ENCODE measurements at regions of chr9 and their contacts with region 1.

Region 1: DNA sequence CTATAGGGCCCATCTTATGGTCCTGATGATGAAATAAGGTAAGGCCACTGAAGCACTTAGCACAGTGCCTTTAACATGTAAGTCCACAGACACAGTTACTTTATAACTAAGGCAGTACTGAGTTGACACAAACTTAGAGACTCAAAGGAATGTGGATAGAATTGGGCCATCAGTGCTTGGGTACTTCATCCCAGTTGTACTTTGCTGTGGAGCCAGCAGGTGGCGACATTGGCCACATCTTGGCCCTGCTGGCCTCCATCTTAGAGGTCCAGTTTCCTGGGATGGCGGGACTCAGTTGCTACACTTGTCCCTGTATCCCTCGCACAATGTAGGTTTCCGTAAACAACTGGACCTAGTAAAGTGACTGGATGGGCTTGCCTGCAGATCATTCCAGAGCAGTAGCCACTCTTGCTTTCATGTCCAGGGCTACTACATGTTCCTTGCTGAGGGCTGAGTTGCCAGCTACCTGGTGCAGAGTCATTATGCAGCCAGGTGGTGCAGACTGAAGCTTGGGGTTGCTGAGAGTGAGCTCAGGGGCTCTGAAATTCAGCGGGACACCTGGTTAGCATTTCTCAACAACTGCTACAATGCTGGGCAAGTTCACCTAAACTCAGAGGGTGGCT is 10.6 kb downstream of the MTAP start:
- DNase-seq: peak; percentile 21 to 80 (median 66)
- ATAC-seq: peak; percentile 85
- H3K4me3 ChIP-seq: no peak overlapping the region
- H3K4me3 Mint-ChIP-seq: no peak overlapping the region
- H3K27ac ChIP-seq: no peak overlapping the region
- H3K27ac Mint-ChIP-seq: peak overlapping the region; percentile 22
- H3K4me1 ChIP-seq: peaks cover 10% of the 10 kb centered on the region
- H3K4me1 Mint-ChIP-seq: peaks cover 22% of the 10 kb centered on the region
- H3K27me3 ChIP-seq: no peaks in the 10 kb centered on the region
- H3K27me3 Mint-ChIP-seq: no peaks in the 10 kb centered on the region
- CTCF ChIP-seq: peak; percentile 66

Region 2: GRCh38 chr9:21506626-21507484 is 306.2 kb before region 1 on chr9:
- CTCF ChIA-PET with region 1: no interaction called
- POLR2A ChIA-PET with region 1: no interaction called
- intact Hi-C with region 1: no loop called
- DNase-seq: no peak
- ATAC-seq: no peak
- H3K4me3 ChIP-seq: no peak overlapping the region
- H3K4me3 Mint-ChIP-seq: no peak overlapping the region
- H3K27ac ChIP-seq: no peak overlapping the region
- H3K27ac Mint-ChIP-seq: no peak overlapping the region
- H3K4me1 ChIP-seq: peaks cover 14% of the 10 kb centered on the region
- H3K4me1 Mint-ChIP-seq: peaks cover 16% of the 10 kb centered on the region
- H3K27me3 ChIP-seq: no peaks in the 10 kb centered on the region
- H3K27me3 Mint-ChIP-seq: no peaks in the 10 kb centered on the region
- CTCF ChIP-seq: no peak

Region 3: GRCh38 chr9:21709464-21710058 is 103.5 kb before region 1 on chr9:
- CTCF ChIA-PET with region 1: no interaction called
- POLR2A ChIA-PET with region 1: no interaction called
- intact Hi-C with region 1: no loop called
- DNase-seq: peak; percentile 35 to 75 (median 65)
- ATAC-seq: peak; percentile 81
- H3K4me3 ChIP-seq: no peak overlapping the region
- H3K4me3 Mint-ChIP-seq: no peak overlapping the region
- H3K27ac ChIP-seq: no peak overlapping the region
- H3K27ac Mint-ChIP-seq: no peak overlapping the region
- H3K4me1 ChIP-seq: no peaks in the 10 kb centered on the region
- H3K4me1 Mint-ChIP-seq: peaks cover 20% of the 10 kb centered on the region
- H3K27me3 ChIP-seq: no peaks in the 10 kb centered on the region
- H3K27me3 Mint-ChIP-seq: no peaks in the 10 kb centered on the region
- CTCF ChIP-seq: peak; percentile 84

Region 4: GRCh38 chr9:21802195-21803000 is 10.7 kb before region 1 on chr9 and contains the start of gene MTAP:
- CTCF ChIA-PET with region 1: interaction called, 17 read pairs
- POLR2A ChIA-PET with region 1: interaction called, 4 read pairs
- intact Hi-C with region 1: loop called in 1 of 2 experiments (anchors 1 kb)
- DNase-seq: peak; percentile 12 to 80 (median 65)
- ATAC-seq: peak; percentile 74
- H3K4me3 ChIP-seq: peak within 1 kb of the TSS; percentile 80 to 91
- H3K4me3 Mint-ChIP-seq: peak within 1 kb of the TSS; percentile 99
- H3K27ac ChIP-seq: peak within 1 kb of the TSS; percentile 63 to 67
- H3K27ac Mint-ChIP-seq: peak within 1 kb of the TSS; percentile 97
- H3K4me1 ChIP-seq: peaks cover 31% of the 10 kb centered on the region
- H3K4me1 Mint-ChIP-seq: peaks cover 42% of the 10 kb centered on the region
- H3K27me3 ChIP-seq: no peaks in the 10 kb centered on the region
- H3K27me3 Mint-ChIP-seq: peaks cover 5% of the 10 kb centered on the region
- CTCF ChIP-seq: no peak
- total RNA-seq, gene MTAP: 9.9 to 14.3 TPM

Region 5: GRCh38 chr9:21828853-21829410 is 15.9 kb after region 1 on chr9:
- CTCF ChIA-PET with region 1: no interaction called
- POLR2A ChIA-PET with region 1: no interaction called
- intact Hi-C with region 1: no loop called
- DNase-seq: no peak
- ATAC-seq: no peak
- H3K4me3 ChIP-seq: no peak overlapping the region
- H3K4me3 Mint-ChIP-seq: no peak overlapping the region
- H3K27ac ChIP-seq: no peak overlapping the region
- H3K27ac Mint-ChIP-seq: no peak overlapping the region
- H3K4me1 ChIP-seq: no peaks in the 10 kb centered on the region
- H3K4me1 Mint-ChIP-seq: peaks cover 14% of the 10 kb centered on the region
- H3K27me3 ChIP-seq: no peaks in the 10 kb centered on the region
- H3K27me3 Mint-ChIP-seq: no peaks in the 10 kb centered on the region
- CTCF ChIP-seq: no peak

Region 6: GRCh38 chr9:21943464-21943863 is 130.4 kb after region 1 on chr9:
- CTCF ChIA-PET with region 1: no interaction called
- POLR2A ChIA-PET with region 1: no interaction called
- intact Hi-C with region 1: no loop called
- DNase-seq: no peak
- ATAC-seq: no peak
- H3K4me3 ChIP-seq: no peak overlapping the region
- H3K4me3 Mint-ChIP-seq: no peak overlapping the region
- H3K27ac ChIP-seq: no peak overlapping the region
- H3K27ac Mint-ChIP-seq: no peak overlapping the region
- H3K4me1 ChIP-seq: no peaks in the 10 kb centered on the region
- H3K4me1 Mint-ChIP-seq: no peaks in the 10 kb centered on the region
- H3K27me3 ChIP-seq: no peaks in the 10 kb centered on the region
- H3K27me3 Mint-ChIP-seq: peaks cover 18% of the 10 kb centered on the region
- CTCF ChIP-seq: no peak

Region 7: GRCh38 chr9:21995177-21996086 is 182.4 kb after region 1 on chr9:
- CTCF ChIA-PET with region 1: interaction called, 3 read pairs
- POLR2A ChIA-PET with region 1: no interaction called
- intact Hi-C with region 1: loop called in 1 of 2 experiments (anchors 1 kb)
- DNase-seq: peak; percentile 48 to 91 (median 76)
- ATAC-seq: peak; percentile 70
- H3K4me3 ChIP-seq: peak overlapping the region; percentile 81 to 96
- H3K4me3 Mint-ChIP-seq: peak overlapping the region; percentile 96
- H3K27ac ChIP-seq: peak overlapping the region; percentile 75 to 81
- H3K27ac Mint-ChIP-seq: peak overlapping the region; percentile 91
- H3K4me1 ChIP-seq: peaks cover 10% of the 10 kb centered on the region
- H3K4me1 Mint-ChIP-seq: peaks cover 14% of the 10 kb centered on the region
- H3K27me3 ChIP-seq: peaks cover 1 to 12% of the 10 kb centered on the region in 2 experiments
- H3K27me3 Mint-ChIP-seq: peaks cover 20% of the 10 kb centered on the region
- CTCF ChIP-seq: no peak

Region 8: DNA sequence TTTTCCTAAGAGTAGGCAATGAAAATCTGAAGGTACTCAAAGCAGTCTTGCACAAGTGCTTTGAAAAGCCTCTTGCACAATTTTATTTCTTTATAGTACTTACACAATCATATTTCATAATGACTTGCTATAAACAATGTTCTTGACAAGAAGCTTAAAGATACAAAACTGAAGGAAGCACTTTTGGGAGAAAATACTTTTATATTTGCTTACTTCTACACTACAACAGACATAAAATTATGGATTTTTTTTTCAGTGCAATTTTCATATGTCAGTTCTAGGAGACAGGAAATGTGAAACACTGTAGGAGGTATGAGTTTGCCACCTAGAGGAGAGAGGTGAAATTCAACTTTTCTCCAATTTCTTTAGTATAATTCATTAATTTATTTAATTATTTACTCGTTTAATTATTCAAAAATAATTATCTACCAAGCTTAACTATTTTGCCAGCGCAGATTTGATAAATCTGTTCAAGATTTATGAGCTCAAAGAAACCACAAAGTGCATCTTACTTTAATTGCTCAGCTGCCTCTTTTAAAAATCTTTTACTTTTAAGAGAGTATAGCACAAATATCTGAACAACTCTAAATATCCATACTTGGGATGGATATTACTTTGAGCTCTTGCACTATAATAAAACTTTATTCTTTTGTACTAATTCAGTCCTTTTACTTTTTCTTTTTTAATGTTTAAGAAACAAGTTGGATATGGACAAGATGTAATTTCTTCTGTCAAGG is 225.1 kb after region 1 on chr9:
- CTCF ChIA-PET with region 1: interaction called, 137 read pairs
- POLR2A ChIA-PET with region 1: no interaction called
- intact Hi-C with region 1: loop called (anchors 1 kb)
- DNase-seq: peak in 2 of 9 experiments; percentile 35 to 56
- ATAC-seq: peak; percentile 51
- H3K4me3 ChIP-seq: no peak overlapping the region
- H3K4me3 Mint-ChIP-seq: no peak overlapping the region
- H3K27ac ChIP-seq: no peak overlapping the region
- H3K27ac Mint-ChIP-seq: no peak overlapping the region
- H3K4me1 ChIP-seq: no peaks in the 10 kb centered on the region
- H3K4me1 Mint-ChIP-seq: no peaks in the 10 kb centered on the region
- H3K27me3 ChIP-seq: no peaks in the 10 kb centered on the region
- H3K27me3 Mint-ChIP-seq: no peaks in the 10 kb centered on the region
- CTCF ChIP-seq: peak; percentile 58

Region 9: GRCh38 chr9:22238809-22239684 is 426.0 kb after region 1 on chr9:
- CTCF ChIA-PET with region 1: interaction called, 4 read pairs
- POLR2A ChIA-PET with region 1: no interaction called
- intact Hi-C with region 1: loop called (anchors 1 to 5 kb)
- DNase-seq: peak in 2 of 9 experiments; percentile 13 to 15
- ATAC-seq: no peak
- H3K4me3 ChIP-seq: no peak overlapping the region
- H3K4me3 Mint-ChIP-seq: no peak overlapping the region
- H3K27ac ChIP-seq: no peak overlapping the region
- H3K27ac Mint-ChIP-seq: no peak overlapping the region
- H3K4me1 ChIP-seq: peaks cover 3% of the 10 kb centered on the region
- H3K4me1 Mint-ChIP-seq: peaks cover 13% of the 10 kb centered on the region
- H3K27me3 ChIP-seq: no peaks in the 10 kb centered on the region
- H3K27me3 Mint-ChIP-seq: no peaks in the 10 kb centered on the region
- CTCF ChIP-seq: no peak

Region 10: GRCh38 chr9:22452415-22453010 is 639.5 kb after region 1 on chr9:
- CTCF ChIA-PET with region 1: interaction called, 15 read pairs
- POLR2A ChIA-PET with region 1: no interaction called
- intact Hi-C with region 1: loop called (anchors 1 kb)
- DNase-seq: peak in 5 of 9 experiments; percentile 11 to 51 (median 40)
- ATAC-seq: peak; percentile 70
- H3K4me3 ChIP-seq: no peak overlapping the region
- H3K4me3 Mint-ChIP-seq: no peak overlapping the region
- H3K27ac ChIP-seq: no peak overlapping the region
- H3K27ac Mint-ChIP-seq: no peak overlapping the region
- H3K4me1 ChIP-seq: no peaks in the 10 kb centered on the region
- H3K4me1 Mint-ChIP-seq: peaks cover 5% of the 10 kb centered on the region
- H3K27me3 ChIP-seq: no peaks in the 10 kb centered on the region
- H3K27me3 Mint-ChIP-seq: peaks cover 31% of the 10 kb centered on the region
- CTCF ChIP-seq: peak; percentile 70

Measured in CD8-positive, alpha-beta T cell (primary cell).